ENCODE measurements at regions of chr2 and their contacts with region 1.

Region 1: DNA sequence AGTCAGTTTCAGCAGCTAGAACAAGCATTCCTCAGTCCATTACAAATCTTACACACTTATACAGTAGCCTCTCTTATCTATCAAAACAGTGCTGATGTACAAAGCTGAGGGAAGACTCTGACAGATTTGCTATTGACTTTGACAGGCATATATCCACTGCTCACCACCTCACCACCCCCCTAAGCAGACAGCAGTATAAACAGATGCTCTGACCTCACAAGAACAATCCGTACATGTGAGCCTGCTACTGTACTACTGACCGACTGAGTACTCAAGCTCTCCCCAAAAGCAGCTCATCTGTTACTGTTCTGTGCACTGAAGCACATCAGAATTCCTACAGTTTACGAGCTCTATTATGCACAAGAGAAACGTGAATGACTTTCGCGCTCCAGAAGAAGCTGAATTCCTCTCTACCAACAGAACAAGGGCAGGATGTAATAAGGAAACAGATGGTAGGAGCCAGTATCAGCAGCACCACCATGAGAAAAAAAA is 95.6 kb upstream of the PDE1A start:
- DNase-seq: peak; percentile 95
- H3K4me3 ChIP-seq: peak overlapping the region in 2 of 3 experiments; percentile 15 to 20
- H3K27ac ChIP-seq: peak overlapping the region; percentile 56
- H3K4me1 ChIP-seq: peaks cover 10% of the 10 kb centered on the region
- H3K27me3 ChIP-seq: no peaks in the 10 kb centered on the region
- CTCF ChIP-seq: no peak
- POLR2A ChIP-seq: no peak

Region 2: GRCh38 chr2:182280118-182280517 is 242.3 kb before region 1 on chr2:
- CTCF ChIA-PET with region 1: no interaction called
- POLR2A ChIA-PET with region 1: no interaction called
- dilution Hi-C with region 1: no loop called
- intact Hi-C with region 1: loop called (anchors 5 kb)
- DNase-seq: peak; percentile 65
- H3K4me3 ChIP-seq: no peak overlapping the region
- H3K27ac ChIP-seq: no peak overlapping the region
- H3K4me1 ChIP-seq: peaks cover 17% of the 10 kb centered on the region
- H3K27me3 ChIP-seq: no peaks in the 10 kb centered on the region
- CTCF ChIP-seq: no peak
- POLR2A ChIP-seq: no peak

Region 3: GRCh38 chr2:182545420-182546167 is 23.1 kb after region 1 on chr2:
- CTCF ChIA-PET with region 1: interaction called, 5 read pairs
- POLR2A ChIA-PET with region 1: no interaction called
- dilution Hi-C with region 1: no loop called
- intact Hi-C with region 1: loop called (anchors 1 kb)
- DNase-seq: peak; percentile 65
- H3K4me3 ChIP-seq: no peak overlapping the region
- H3K27ac ChIP-seq: peak overlapping the region; percentile 22
- H3K4me1 ChIP-seq: peaks cover 53% of the 10 kb centered on the region
- H3K27me3 ChIP-seq: no peaks in the 10 kb centered on the region
- CTCF ChIP-seq: no peak
- POLR2A ChIP-seq: no peak

Region 4: GRCh38 chr2:182642328-182642727 is 119.9 kb after region 1 on chr2:
- CTCF ChIA-PET with region 1: no interaction called
- POLR2A ChIA-PET with region 1: no interaction called
- dilution Hi-C with region 1: no loop called
- intact Hi-C with region 1: loop called (anchors 5 kb)
- DNase-seq: peak; percentile 56
- H3K4me3 ChIP-seq: no peak overlapping the region
- H3K27ac ChIP-seq: no peak overlapping the region
- H3K4me1 ChIP-seq: no peaks in the 10 kb centered on the region
- H3K27me3 ChIP-seq: no peaks in the 10 kb centered on the region
- CTCF ChIP-seq: no peak
- POLR2A ChIP-seq: no peak

Measured in endothelial cell of umbilical vein (primary cell).